IMR-90 (cell line): ENCODE measurements at regions of chr16 and their contacts with region 1.

Region 1: GRCh38 chr16:48308535-48308934 is 61.2 kb upstream of the ABCC11 start:
- DNase-seq: no peak
- ATAC-seq: no peak
- H3K4me3 ChIP-seq: no peak overlapping the region
- H3K27ac ChIP-seq: no peak overlapping the region
- H3K4me1 ChIP-seq: no peaks in the 10 kb centered on the region
- H3K27me3 ChIP-seq: no peaks in the 10 kb centered on the region
- CTCF ChIP-seq: no peak
- POLR2A ChIP-seq: no peak
- RAD21 ChIP-seq: no peak

Region 2: GRCh38 chr16:48321317-48322036 is 12.9 kb after region 1 on chr16:
- CTCF ChIA-PET with region 1: no interaction called
- POLR2A ChIA-PET with region 1: interaction called, 13 read pairs
- dilution Hi-C with region 1: no loop called
- in situ Hi-C with region 1: no loop called
- intact Hi-C with region 1: no loop called
- DNase-seq: peak; percentile 85
- ATAC-seq: peak; percentile 80
- H3K4me3 ChIP-seq: no peak overlapping the region
- H3K27ac ChIP-seq: peak overlapping the region; percentile 42; the same call in 1 of the 2 replicates
- H3K4me1 ChIP-seq: peaks cover 9% of the 10 kb centered on the region
- H3K27me3 ChIP-seq: no peaks in the 10 kb centered on the region
- CTCF ChIP-seq: no peak
- POLR2A ChIP-seq: no peak
- RAD21 ChIP-seq: no peak

Region 3: DNA sequence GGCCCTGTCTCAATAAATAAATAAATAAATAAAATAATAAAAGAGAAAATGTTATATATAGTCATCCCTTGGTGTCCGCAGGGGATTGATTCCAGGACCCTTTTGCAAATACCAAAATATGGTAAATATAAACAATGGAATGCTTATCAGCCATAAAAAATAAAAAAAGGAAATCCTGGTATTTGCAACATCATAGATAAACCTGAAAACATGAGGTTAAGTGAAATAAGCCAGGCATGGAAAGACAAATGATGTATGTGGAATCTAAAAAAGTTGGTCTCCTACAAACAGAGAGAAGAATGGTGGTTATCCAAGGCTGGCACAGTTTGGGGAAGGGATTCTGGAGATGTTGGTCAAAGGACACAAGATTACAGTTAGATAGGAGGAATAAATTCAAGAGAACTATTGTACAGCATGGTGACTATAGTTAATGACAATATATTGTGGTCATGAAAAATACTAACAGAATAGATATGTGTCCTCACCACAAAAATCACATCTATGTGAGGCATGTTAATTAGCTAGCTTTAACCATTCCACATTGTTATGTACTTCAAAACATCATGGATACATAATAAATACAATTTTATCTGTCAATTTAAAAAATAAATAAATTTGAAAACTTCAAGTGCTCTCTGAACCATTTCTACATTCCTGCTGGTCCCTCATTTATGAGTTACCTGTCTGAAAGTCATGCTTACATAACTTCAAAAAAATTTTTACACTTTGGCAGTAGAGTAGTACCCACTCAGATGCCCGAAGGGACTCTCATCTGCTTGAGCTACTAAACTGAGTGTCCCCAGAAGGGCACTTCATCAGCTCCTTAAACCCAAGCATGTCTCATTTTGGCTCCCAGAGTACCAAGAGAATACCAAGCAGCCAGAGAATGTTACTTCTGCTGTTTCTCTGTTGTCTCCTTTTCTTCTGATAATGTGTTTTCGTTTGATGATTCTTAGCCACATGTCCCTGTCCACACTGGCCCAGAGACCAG is 274.8 kb after region 1 on chr16:
- CTCF ChIA-PET with region 1: no interaction called
- POLR2A ChIA-PET with region 1: no interaction called
- dilution Hi-C with region 1: no loop called
- in situ Hi-C with region 1: no loop called
- intact Hi-C with region 1: no loop called
- DNase-seq: no peak
- ATAC-seq: peak; percentile 68
- H3K4me3 ChIP-seq: no peak overlapping the region
- H3K27ac ChIP-seq: no peak overlapping the region
- H3K4me1 ChIP-seq: peaks cover 7% of the 10 kb centered on the region; the same call in 1 of the 2 replicates
- H3K27me3 ChIP-seq: no peaks in the 10 kb centered on the region
- CTCF ChIP-seq: no peak
- POLR2A ChIP-seq: no peak
- RAD21 ChIP-seq: no peak